ENCODE measurements at regions of chr9 and their contacts with region 1.

Region 1: GRCh38 chr9:88991066-88992034 is at the start of gene S1PR3:
- DNase-seq: peak; percentile 52 to 86 (median 72)
- ATAC-seq: peak; percentile 88 to 93 (median 90)
- H3K4me3 ChIP-seq: peak within 1 kb of the TSS; percentile 52 to 81 (median 63)
- H3K27ac ChIP-seq: peak within 1 kb of the TSS in 2 of 4 donors; percentile 22 to 34
- H3K4me1 ChIP-seq: peaks cover 0 to 16% (median 0%) of the 10 kb centered on the region in 3 donors
- H3K27me3 ChIP-seq: no peaks in the 10 kb centered on the region
- CTCF ChIP-seq: no peak
- total RNA-seq, gene S1PR3: 1.4 to 4.1 (median 2.8) TPM

Region 2: DNA sequence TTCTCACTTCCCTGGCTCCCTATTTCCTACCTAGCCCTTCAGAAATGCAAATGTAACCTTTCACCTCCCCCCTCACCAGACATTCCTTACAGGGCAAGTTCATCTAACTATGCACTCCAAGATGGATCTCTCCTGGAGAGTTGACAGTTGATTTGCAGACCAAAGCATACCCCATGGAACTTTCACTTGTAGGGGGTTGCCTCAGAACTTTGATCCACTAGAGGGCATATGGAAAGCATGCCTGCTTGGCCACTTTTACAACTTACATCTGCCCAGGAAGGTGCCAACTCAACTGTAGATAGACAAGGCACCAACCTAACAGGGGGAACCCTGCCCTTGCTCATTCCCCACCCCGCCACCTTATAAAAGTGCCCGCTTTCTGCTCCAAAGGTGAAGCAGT is 268.6 kb before region 1 on chr9:
- intact Hi-C with region 1: loop called in 1 of 3 experiments (anchors 10 kb)
- DNase-seq: no peak
- ATAC-seq: peak in 2 of 4 donors; percentile 34 to 38
- H3K4me3 ChIP-seq: no peak overlapping the region
- H3K27ac ChIP-seq: no peak overlapping the region
- H3K4me1 ChIP-seq: no peaks in the 10 kb centered on the region
- H3K27me3 ChIP-seq: no peaks in the 10 kb centered on the region
- CTCF ChIP-seq: no peak

Measured in pancreas (tissue), 10 donors.